ENCODE measurements at regions of chr4 and their contacts with region 1.

Region 1: DNA sequence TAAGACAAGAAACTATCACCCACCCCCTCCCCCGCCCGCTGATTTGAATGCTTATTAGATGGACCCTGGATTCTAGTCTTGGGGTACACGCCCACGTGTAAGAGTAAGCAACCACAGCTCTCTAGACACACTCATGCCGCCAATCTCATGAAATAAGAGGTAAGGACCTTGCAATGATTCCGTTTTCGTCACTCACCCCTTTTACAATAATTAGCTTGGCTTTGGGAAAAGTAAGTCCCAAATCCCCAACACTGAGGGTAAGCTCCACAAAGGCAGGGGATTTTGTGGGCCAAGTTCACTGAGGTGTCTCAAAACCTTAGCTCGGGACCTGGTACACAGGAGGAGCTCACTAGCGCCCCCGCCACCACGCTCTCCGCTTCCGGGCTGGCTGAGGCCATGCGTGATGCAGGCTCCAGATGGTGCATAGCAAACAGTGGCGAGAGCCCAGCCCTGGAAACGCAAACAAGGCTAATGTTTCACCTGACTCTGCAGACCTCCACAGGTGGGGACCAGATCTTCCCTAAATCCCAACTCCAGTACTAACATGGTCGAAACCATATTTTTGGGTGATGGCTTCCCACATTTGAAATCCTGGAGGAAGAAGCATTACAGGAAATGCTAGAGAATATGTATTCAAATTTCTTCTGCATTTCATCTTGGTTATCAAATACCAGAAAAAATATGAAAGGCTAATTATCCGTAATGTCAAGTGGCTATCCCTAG is 4.1 kb downstream of the PLAC8 start:
- DNase-seq: peak; percentile 84 to 94
- ATAC-seq: peak; percentile 65 to 87 (median 77)
- H3K4me3 ChIP-seq: peak overlapping the region; percentile 79
- H3K4me3 Mint-ChIP-seq: peak overlapping the region; percentile 90
- H3K27ac ChIP-seq: peak overlapping the region; percentile 67
- H3K27ac Mint-ChIP-seq: peak overlapping the region; percentile 96 to 98
- H3K4me1 ChIP-seq: peaks cover 38% of the 10 kb centered on the region
- H3K4me1 Mint-ChIP-seq: peaks cover 58 to 67% of the 10 kb centered on the region in 2 donors
- H3K27me3 ChIP-seq: no peaks in the 10 kb centered on the region
- H3K27me3 Mint-ChIP-seq: no peaks in the 10 kb centered on the region
- CTCF ChIP-seq: peak; percentile 71

Region 2: DNA sequence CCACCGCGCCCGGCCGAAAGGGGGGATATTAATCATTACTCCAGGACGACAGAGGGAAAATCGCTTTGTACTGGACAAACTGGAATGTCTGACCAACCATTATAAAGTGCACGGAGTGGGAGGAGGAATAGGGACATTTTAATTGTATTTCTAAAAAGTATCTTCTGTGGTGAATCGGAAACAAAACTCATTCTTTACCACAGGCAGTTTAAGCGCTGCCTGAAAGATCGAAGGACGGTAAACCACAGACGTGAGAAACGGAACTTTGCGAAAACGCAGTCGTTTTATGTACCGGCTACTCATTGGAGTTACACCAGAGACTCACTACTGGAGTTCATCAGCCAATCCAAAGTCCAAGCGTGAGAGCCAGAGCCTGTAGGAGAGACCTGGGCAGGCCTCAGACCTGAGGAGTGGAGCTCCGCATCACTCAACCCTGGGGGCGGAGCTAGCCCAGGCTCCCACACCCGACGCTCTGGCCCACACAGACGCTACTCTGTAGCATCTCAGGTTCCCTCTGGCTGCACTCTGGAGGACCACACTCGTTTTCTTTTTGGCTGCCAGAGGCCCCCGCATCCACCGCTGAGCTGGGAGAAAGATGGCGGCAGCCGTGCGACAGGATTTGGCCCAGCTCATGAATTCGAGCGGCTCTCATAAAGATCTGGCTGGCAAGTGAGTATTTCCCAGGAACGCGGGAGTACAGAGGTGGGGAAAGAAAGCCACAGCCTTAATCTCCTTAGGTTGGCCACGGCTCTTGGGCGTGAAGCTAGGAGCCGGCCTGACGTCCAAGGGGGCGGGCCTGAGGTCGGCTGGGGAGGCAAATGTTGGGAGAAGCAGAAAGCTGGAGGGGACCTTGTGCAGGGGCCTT is 75.5 kb before region 1 on chr4 and contains the start of gene COPS4:
- intact Hi-C with region 1: loop called (anchors 10 kb)
- DNase-seq: peak; percentile 90 to 99
- ATAC-seq: peak; percentile 95 to 100 (median 95)
- H3K4me3 ChIP-seq: peak within 1 kb of the TSS; percentile 85
- H3K4me3 Mint-ChIP-seq: peak within 1 kb of the TSS; percentile 100
- H3K27ac ChIP-seq: peak within 1 kb of the TSS; percentile 87
- H3K27ac Mint-ChIP-seq: peak within 1 kb of the TSS; percentile 95 to 99
- H3K4me1 ChIP-seq: peaks cover 11% of the 10 kb centered on the region
- H3K4me1 Mint-ChIP-seq: peaks cover 25 to 30% of the 10 kb centered on the region in 2 donors
- H3K27me3 ChIP-seq: no peaks in the 10 kb centered on the region
- H3K27me3 Mint-ChIP-seq: no peaks in the 10 kb centered on the region
- CTCF ChIP-seq: peak; percentile 25
- total RNA-seq, gene COPS4: 35.8 to 39.8 (median 36.1) TPM

Region 3: DNA sequence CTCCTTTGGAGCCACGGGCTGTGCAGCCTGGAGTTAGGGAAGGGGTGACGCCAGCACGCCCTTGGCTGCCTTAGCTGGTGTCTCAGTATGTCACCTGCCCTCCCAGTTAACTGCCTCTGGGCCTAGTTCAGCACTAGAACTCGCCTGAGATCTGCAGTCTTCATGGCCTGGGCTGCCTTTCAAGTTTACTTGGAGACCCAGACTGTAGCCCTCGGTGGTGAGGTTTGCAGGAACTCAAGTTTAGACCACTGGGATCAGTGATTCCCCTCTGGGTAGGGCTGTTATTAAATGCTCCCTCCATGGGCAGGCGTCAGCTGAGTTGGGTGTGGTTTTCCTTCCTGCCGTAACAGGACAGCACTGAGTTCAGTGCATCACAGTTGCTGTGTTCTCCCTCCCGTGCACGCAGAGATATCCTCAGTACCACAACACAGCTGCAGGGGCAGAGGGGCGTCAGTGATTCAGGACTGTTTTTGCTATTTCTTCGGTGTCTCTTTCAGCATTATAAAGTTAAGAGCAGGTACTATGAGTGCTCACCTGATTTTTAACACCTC is 26.4 kb before region 1 on chr4:
- intact Hi-C with region 1: loop called (anchors 1 kb)
- DNase-seq: peak; percentile 36 to 89
- ATAC-seq: peak; percentile 85 to 89 (median 89)
- H3K4me3 ChIP-seq: no peak overlapping the region
- H3K4me3 Mint-ChIP-seq: peak overlapping the region; percentile 64
- H3K27ac ChIP-seq: peak overlapping the region; percentile 80
- H3K27ac Mint-ChIP-seq: peak overlapping the region; percentile 91 to 93
- H3K4me1 ChIP-seq: peaks cover 44% of the 10 kb centered on the region
- H3K4me1 Mint-ChIP-seq: peaks cover 66 to 69% of the 10 kb centered on the region in 2 donors
- H3K27me3 ChIP-seq: no peaks in the 10 kb centered on the region
- H3K27me3 Mint-ChIP-seq: no peaks in the 10 kb centered on the region
- CTCF ChIP-seq: no peak

Region 4: DNA sequence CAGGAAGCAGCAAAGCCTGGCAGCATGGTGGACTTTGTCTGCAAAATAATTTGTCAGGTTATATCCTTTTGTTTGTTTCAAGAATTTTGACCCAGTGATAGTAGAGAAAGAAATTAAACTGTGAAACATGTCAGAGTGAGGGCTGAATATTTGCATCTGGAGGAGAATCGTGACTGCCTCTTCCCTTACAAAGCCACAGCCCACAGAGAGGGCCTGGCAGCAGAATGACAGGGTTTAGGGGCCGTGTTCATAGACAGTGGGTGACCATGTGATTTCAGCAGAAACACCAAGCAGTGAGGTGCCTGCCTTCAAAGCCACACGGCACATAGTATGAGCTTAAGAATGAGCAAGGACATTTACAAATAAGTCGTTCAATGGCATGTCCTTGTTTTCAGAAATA is 28.6 kb after region 1 on chr4:
- intact Hi-C with region 1: loop called (anchors 2 kb)
- DNase-seq: peak; percentile 59 to 60
- ATAC-seq: peak; percentile 91 to 99 (median 92)
- H3K4me3 ChIP-seq: no peak overlapping the region
- H3K4me3 Mint-ChIP-seq: peak overlapping the region; percentile 72
- H3K27ac ChIP-seq: peak overlapping the region; percentile 77
- H3K27ac Mint-ChIP-seq: peak overlapping the region; percentile 87 to 95
- H3K4me1 ChIP-seq: peaks cover 34% of the 10 kb centered on the region
- H3K4me1 Mint-ChIP-seq: peaks cover 53 to 61% of the 10 kb centered on the region in 2 donors
- H3K27me3 ChIP-seq: no peaks in the 10 kb centered on the region
- H3K27me3 Mint-ChIP-seq: no peaks in the 10 kb centered on the region
- CTCF ChIP-seq: no peak

Region 5: DNA sequence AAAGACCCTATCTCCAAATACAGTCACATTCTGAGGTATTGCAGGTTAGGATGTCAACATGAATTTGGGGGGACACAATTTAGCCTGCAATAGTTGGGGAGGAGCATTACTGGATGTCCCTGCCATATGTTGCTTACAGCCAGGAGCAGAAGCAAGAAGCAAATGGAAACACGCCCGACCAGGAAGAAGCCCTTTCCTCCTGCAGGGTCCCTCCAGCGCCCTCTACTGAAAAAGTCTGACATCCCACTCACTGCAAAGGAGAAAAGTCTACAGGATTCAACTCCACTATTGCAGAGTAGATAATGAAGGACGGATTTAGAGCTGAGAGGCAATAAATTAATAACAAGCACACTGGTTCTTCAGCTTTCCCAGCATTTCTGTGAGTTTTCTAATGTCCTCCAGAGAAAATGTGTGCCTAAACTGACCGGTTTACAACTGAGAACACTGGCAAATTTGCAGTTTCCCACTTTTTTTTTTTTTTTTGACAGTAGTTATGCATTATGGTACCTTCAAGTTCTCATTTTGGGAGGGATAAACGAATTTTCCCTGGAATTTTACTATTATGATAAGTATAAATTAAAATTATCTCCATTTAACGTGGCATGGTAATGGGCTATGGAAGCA is 142.5 kb after region 1 on chr4:
- intact Hi-C with region 1: loop called (anchors 2 kb)
- DNase-seq: peak; percentile 51 to 90
- ATAC-seq: peak; percentile 85 to 95 (median 95)
- H3K4me3 ChIP-seq: no peak overlapping the region
- H3K4me3 Mint-ChIP-seq: peak overlapping the region; percentile 23
- H3K27ac ChIP-seq: peak overlapping the region; percentile 22
- H3K27ac Mint-ChIP-seq: peak overlapping the region; percentile 76 to 82
- H3K4me1 ChIP-seq: peaks cover 25% of the 10 kb centered on the region
- H3K4me1 Mint-ChIP-seq: peaks cover 39 to 42% of the 10 kb centered on the region in 2 donors
- H3K27me3 ChIP-seq: no peaks in the 10 kb centered on the region
- H3K27me3 Mint-ChIP-seq: no peaks in the 10 kb centered on the region
- CTCF ChIP-seq: peak; percentile 84

Region 6: DNA sequence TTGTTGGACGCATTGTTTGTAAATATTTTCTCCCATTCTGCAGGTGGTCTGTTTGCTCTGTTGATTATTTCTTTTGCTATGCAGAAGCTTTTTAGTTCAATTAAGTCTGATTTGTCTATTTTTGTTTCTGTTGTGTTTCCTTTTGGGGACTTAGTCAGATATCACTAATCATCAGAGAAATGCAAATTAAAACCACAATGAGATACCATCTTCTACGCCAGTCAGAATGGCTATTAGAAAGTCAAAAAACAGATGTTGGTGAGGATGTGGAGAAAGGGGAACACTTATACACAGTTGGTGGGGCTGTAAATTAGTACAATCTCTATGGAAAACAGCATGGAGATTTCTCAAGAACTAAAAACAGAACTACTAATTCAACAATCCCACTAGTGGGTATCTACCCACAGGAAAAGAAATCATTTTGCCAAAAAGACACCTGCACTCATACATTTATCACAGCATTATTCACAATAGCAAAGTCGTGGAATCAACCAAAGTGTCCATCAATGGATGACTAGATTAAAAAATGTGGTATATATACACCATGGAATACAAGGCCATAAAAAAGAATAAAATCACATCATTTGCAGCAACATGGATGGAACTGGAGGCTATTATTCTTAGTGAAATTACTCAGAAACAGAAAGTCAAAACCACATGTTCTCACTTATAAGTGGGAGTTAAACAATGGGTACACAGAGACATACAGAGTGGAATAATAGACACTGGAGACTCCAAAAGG is 166.1 kb after region 1 on chr4:
- intact Hi-C with region 1: no loop called
- DNase-seq: no peak
- ATAC-seq: no peak
- H3K4me3 ChIP-seq: no peak overlapping the region
- H3K4me3 Mint-ChIP-seq: no peak overlapping the region
- H3K27ac ChIP-seq: no peak overlapping the region
- H3K27ac Mint-ChIP-seq: no peak overlapping the region
- H3K4me1 ChIP-seq: no peaks in the 10 kb centered on the region
- H3K4me1 Mint-ChIP-seq: peaks cover 9 to 19% of the 10 kb centered on the region in 2 donors
- H3K27me3 ChIP-seq: no peaks in the 10 kb centered on the region
- H3K27me3 Mint-ChIP-seq: no peaks in the 10 kb centered on the region
- CTCF ChIP-seq: no peak

Region 7: DNA sequence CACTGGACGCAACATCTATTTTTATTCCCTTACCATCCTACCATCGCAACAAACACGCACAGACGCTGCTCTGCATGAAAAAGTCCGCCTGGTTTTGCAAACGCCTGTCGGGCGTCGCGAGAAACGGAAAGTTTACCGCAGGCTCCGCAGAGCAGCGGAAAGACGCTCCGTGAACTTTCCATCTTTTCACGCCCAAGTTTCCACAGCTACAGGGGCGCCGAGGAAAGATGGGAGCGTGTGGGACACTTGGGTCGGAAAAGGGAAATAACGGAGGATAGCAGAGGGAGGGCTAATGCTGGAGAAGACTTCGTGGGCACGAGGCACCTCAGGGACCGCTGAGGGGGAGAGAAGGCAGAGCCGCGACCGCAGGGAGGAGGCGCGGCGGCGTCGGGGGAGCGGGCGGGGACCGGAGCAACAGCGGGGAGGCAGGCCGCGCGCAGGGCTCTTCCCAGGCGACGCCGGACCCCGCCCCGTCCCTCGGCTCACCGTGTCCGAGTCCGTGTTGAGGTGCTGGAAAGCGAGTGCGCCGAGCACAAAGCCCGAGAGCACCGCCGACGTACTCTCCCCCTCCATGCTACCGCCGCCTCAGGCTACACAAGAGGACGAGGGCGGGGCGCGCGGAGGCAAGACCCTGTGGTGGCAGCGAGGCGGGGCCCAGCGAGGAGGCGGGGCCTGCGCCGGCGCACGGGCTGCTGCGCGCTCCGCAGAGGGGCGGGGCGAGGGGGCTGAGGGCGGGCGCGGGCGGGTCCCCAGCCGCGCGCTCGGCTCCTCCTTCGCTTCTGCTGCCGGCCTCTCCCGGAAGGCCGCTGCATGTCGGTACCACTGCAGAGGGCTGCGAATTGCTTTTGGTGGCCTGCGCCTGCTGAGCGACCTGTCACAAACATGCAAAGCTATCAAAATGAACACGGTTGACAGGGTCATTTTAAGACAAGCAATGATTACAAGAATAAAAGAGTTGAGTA is 374.4 kb after region 1 on chr4 and contains the start of gene ABRAXAS1:
- intact Hi-C with region 1: no loop called
- DNase-seq: peak; percentile 93 to 97
- ATAC-seq: peak; percentile 95 to 100 (median 97)
- H3K4me3 ChIP-seq: peak within 1 kb of the TSS; percentile 67
- H3K4me3 Mint-ChIP-seq: peak within 1 kb of the TSS; percentile 99
- H3K27ac ChIP-seq: peak within 1 kb of the TSS; percentile 67
- H3K27ac Mint-ChIP-seq: peak within 1 kb of the TSS; percentile 92 to 96
- H3K4me1 ChIP-seq: peaks cover 11% of the 10 kb centered on the region
- H3K4me1 Mint-ChIP-seq: peaks cover 14 to 21% of the 10 kb centered on the region in 2 donors
- H3K27me3 ChIP-seq: no peaks in the 10 kb centered on the region
- H3K27me3 Mint-ChIP-seq: no peaks in the 10 kb centered on the region
- CTCF ChIP-seq: no peak
- total RNA-seq, gene ABRAXAS1: 10.7 to 14.0 (median 13.9) TPM

Region 8: GRCh38 chr4:83535520-83536361 is 425.4 kb after region 1 on chr4 and contains the start of gene GPAT3:
- intact Hi-C with region 1: no loop called
- DNase-seq: peak; percentile 39 to 72
- ATAC-seq: peak; percentile 77 to 81 (median 80)
- H3K4me3 ChIP-seq: peak within 1 kb of the TSS; percentile 49
- H3K4me3 Mint-ChIP-seq: peak within 1 kb of the TSS; percentile 92
- H3K27ac ChIP-seq: no peak within 1 kb of the TSS
- H3K27ac Mint-ChIP-seq: peak within 1 kb of the TSS; percentile 32 to 75
- H3K4me1 ChIP-seq: peaks cover 18% of the 10 kb centered on the region
- H3K4me1 Mint-ChIP-seq: peaks cover 16 to 21% of the 10 kb centered on the region in 2 donors
- H3K27me3 ChIP-seq: peaks cover 6% of the 10 kb centered on the region
- H3K27me3 Mint-ChIP-seq: peaks cover 38 to 45% of the 10 kb centered on the region in 2 donors
- CTCF ChIP-seq: no peak
- total RNA-seq, gene GPAT3: 0.54 to 11.3 (median 1.2) TPM